Panc1 (cell line): ENCODE measurements at regions of chr1 and their contacts with region 1.

Region 1: DNA sequence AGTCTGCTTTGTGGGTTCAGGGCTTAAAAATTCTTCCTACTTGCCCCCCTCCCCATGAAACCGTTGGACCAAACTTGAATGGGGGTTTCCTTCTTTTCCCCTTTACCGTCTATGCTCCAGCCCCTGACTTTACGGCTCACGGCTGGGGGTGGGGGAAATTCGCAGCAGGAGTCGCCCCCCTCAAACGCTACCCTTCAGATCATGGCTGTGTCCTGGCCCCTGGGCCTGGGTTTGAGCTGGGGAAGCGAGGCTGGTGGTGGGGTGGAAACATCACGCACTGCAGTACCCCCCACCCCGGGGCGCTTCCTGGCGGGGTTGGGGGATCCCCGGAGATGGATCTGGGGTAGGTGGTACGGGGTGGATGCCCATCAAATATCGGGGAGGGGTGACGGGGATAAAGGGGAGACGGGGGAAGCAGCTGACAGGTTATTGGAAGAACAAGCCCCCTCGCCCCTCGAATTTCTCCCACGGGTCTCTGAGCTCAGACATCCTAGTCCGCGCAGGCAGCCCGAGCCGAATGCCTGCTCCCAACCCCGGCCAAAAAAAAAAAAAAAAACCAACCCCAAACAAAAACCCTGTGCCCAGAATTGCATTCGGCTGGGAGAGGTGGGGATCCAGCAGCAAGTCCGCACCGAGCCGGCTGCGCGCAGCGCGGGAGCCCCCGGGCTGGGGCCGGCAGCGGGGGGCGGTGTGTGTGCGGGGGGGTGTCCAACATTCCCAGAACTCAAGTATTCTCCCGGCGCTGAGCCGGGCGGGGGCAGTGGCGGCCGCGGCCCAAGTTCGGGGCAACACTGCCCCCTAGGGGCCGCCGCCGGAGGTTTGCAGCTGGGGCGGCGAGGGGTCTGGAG is 59.0 kb upstream of the ACOT11 start:
- DNase-seq: peak; percentile 24
- ATAC-seq: peak; percentile 82
- H3K4me3 ChIP-seq: peak overlapping the region; percentile 61 to 62
- H3K27ac ChIP-seq: peak overlapping the region; percentile 89
- H3K4me1 ChIP-seq: peaks cover 18% of the 10 kb centered on the region
- H3K27me3 ChIP-seq: no peaks in the 10 kb centered on the region
- CTCF ChIP-seq: peak; percentile 94

Region 2: GRCh38 chr1:53837646-53837923 is 651.4 kb before region 1 on chr1:
- CTCF ChIA-PET with region 1: no interaction called
- POLR2A ChIA-PET with region 1: interaction called, 10 read pairs
- in situ Hi-C with region 1: no loop called
- intact Hi-C with region 1: no loop called
- DNase-seq: no peak
- ATAC-seq: no peak
- H3K4me3 ChIP-seq: peak overlapping the region; percentile 89 to 99
- H3K27ac ChIP-seq: peak overlapping the region; percentile 93
- H3K4me1 ChIP-seq: peaks cover 16% of the 10 kb centered on the region; the same call in 1 of the 2 replicates
- H3K27me3 ChIP-seq: no peaks in the 10 kb centered on the region
- CTCF ChIP-seq: no peak

Region 3: DNA sequence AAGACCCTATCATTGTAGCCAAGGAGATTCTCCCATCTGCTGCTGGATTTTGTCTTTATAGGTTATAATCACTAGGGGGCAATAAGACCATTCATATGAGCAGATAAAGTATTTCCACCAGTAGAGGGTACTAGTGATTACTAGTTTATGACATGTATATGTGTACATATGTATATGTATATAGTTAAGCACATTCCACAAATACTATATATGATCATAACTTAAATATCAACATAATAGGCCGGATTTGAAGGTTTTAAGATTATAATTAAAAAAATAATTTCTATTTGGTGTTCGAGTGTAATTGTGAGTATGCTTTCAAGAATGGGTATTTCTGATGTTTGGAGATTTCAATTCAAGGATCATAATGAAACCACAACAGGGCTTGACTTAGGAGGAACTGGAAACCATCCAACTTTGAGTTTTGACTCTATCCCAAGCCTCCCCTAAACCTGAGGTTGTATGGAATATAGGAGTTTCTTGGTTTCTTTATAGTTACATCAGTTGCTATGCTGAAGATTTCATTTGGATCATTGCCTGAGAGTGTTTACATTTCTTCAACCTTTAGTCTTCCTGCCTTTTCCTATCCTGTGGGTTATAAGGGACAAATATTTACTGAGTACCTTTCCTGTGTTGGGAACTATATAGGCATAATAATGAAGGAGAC is 418.7 kb before region 1 on chr1:
- CTCF ChIA-PET with region 1: interaction called, 4 read pairs
- POLR2A ChIA-PET with region 1: no interaction called
- in situ Hi-C with region 1: no loop called
- intact Hi-C with region 1: loop called (anchors 2 kb)
- DNase-seq: no peak
- ATAC-seq: peak; percentile 96
- H3K4me3 ChIP-seq: no peak overlapping the region
- H3K27ac ChIP-seq: no peak overlapping the region
- H3K4me1 ChIP-seq: no peaks in the 10 kb centered on the region
- H3K27me3 ChIP-seq: no peaks in the 10 kb centered on the region
- CTCF ChIP-seq: peak; percentile 77

Region 4: GRCh38 chr1:54125386-54126070 is 363.5 kb before region 1 on chr1:
- CTCF ChIA-PET with region 1: interaction called, 6 read pairs
- POLR2A ChIA-PET with region 1: no interaction called
- in situ Hi-C with region 1: no loop called
- intact Hi-C with region 1: loop called (anchors 2 kb)
- DNase-seq: no peak
- ATAC-seq: peak; percentile 37; the same call in 1 of the 2 replicates
- H3K4me3 ChIP-seq: no peak overlapping the region
- H3K27ac ChIP-seq: no peak overlapping the region
- H3K4me1 ChIP-seq: peaks cover 5% of the 10 kb centered on the region
- H3K27me3 ChIP-seq: no peaks in the 10 kb centered on the region
- CTCF ChIP-seq: no peak; the same call in 1 of the 2 replicates

Region 5: GRCh38 chr1:54220004-54220811 is 268.8 kb before region 1 on chr1:
- CTCF ChIA-PET with region 1: interaction called, 10 read pairs
- POLR2A ChIA-PET with region 1: no interaction called
- in situ Hi-C with region 1: no loop called
- intact Hi-C with region 1: no loop called
- DNase-seq: no peak
- ATAC-seq: no peak
- H3K4me3 ChIP-seq: no peak overlapping the region
- H3K27ac ChIP-seq: no peak overlapping the region
- H3K4me1 ChIP-seq: no peaks in the 10 kb centered on the region
- H3K27me3 ChIP-seq: no peaks in the 10 kb centered on the region
- CTCF ChIP-seq: no peak

Region 6: GRCh38 chr1:54310439-54311328 is 178.3 kb before region 1 on chr1:
- CTCF ChIA-PET with region 1: interaction called, 4 read pairs
- POLR2A ChIA-PET with region 1: no interaction called
- in situ Hi-C with region 1: no loop called
- intact Hi-C with region 1: loop called (anchors 5 kb)
- DNase-seq: no peak
- ATAC-seq: peak; percentile 52; the same call in 1 of the 2 replicates
- H3K4me3 ChIP-seq: no peak overlapping the region
- H3K27ac ChIP-seq: no peak overlapping the region
- H3K4me1 ChIP-seq: no peaks in the 10 kb centered on the region
- H3K27me3 ChIP-seq: no peaks in the 10 kb centered on the region
- CTCF ChIP-seq: no peak; the same call in 1 of the 2 replicates

Region 7: GRCh38 chr1:54406339-54407153 is 82.5 kb before region 1 on chr1 and contains the start of gene SSBP3:
- CTCF ChIA-PET with region 1: no interaction called
- POLR2A ChIA-PET with region 1: interaction called, 17 read pairs
- in situ Hi-C with region 1: no loop called
- intact Hi-C with region 1: loop called (anchors 1 kb)
- DNase-seq: no peak
- ATAC-seq: peak; percentile 96
- H3K4me3 ChIP-seq: peak within 1 kb of the TSS; percentile 57 to 78
- H3K27ac ChIP-seq: peak within 1 kb of the TSS; percentile 77
- H3K4me1 ChIP-seq: peaks cover 19% of the 10 kb centered on the region
- H3K27me3 ChIP-seq: no peaks in the 10 kb centered on the region
- CTCF ChIP-seq: no peak
- total RNA-seq, gene SSBP3: 22.5 TPM

Region 8: DNA sequence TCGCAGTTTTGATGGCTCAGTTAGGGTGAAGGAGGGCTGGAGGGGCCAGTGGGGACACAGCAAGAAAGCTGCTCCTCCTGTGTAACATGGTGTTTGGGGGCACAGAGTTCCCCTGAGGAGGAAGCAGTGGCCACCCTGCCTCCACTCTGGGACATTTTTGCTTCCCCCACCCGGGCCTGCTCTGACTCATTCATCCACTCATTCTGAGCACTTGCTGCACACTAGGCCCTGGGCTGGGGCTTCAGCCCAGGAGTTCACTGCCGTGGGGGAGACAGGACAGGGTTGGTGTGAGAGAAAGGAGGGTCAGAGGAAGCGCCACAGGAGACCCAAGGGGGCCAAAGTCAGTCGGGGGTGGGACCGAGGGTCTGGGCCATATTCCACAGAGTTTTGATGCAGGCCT is 17.6 kb after region 1 on chr1:
- CTCF ChIA-PET with region 1: no interaction called
- POLR2A ChIA-PET with region 1: no interaction called
- in situ Hi-C with region 1: no loop called
- intact Hi-C with region 1: no loop called
- DNase-seq: no peak
- ATAC-seq: no peak
- H3K4me3 ChIP-seq: no peak overlapping the region
- H3K27ac ChIP-seq: no peak overlapping the region
- H3K4me1 ChIP-seq: no peaks in the 10 kb centered on the region
- H3K27me3 ChIP-seq: 0 out of 2 replicates have a peak, but pooled peaks cover 2% of the 10 kb centered on the region
- CTCF ChIP-seq: no peak